HepG2 (cell line): ENCODE measurements at regions of chr18 and their contacts with region 1.

Region 1: GRCh38 chr18:70072678-70073077 is 125.0 kb upstream of the CD226 start:
- DNase-seq: peak; percentile 34
- ATAC-seq: peak; percentile 52; the same call in 1 of the 3 replicates
- H3K4me3 ChIP-seq: no peak overlapping the region
- H3K27ac ChIP-seq: no peak overlapping the region
- H3K4me1 ChIP-seq: no peaks in the 10 kb centered on the region
- H3K27me3 ChIP-seq: no peaks in the 10 kb centered on the region
- CTCF ChIP-seq: peak; percentile 70
- EP300 ChIP-seq: no peak
- POLR2A ChIP-seq: no peak
- RAD21 ChIP-seq: no peak

Region 2: DNA sequence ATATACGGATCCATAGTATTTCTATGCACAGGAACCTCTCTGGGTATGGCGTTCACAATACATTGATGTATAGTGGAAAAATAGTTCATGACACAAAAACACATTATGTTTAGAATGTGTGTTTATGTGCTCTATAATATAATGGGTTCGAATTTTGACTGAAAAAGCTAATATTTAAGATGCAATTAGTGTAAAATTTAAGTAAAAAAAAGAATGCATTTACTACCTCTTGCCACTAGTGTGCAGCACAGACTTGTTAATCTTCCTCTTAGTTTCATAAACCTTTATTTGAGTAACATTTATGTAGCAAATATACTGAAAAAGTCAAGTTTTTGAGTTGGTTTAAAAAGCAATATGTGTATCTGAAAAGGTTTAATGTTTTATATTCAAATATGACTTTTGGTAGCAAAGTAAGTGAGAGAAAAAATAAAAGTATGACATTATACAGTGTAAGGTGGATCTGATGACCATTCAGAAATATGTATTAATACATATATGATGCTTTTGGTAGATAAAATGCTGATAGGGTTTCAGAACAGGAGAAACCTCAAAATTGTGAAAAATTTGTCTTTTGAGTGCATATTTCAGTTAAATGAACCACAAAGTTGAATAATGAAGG is 1225.3 kb before region 1 on chr18:
- CTCF ChIA-PET with region 1: no interaction called
- POLR2A ChIA-PET with region 1: no interaction called
- in situ Hi-C with region 1: no loop called
- intact Hi-C with region 1: loop called (anchors 1 kb)
- DNase-seq: peak; percentile 4
- ATAC-seq: no peak
- H3K4me3 ChIP-seq: no peak overlapping the region
- H3K27ac ChIP-seq: no peak overlapping the region
- H3K4me1 ChIP-seq: no peaks in the 10 kb centered on the region
- H3K27me3 ChIP-seq: no peaks in the 10 kb centered on the region
- CTCF ChIP-seq: peak; percentile 63
- EP300 ChIP-seq: no peak
- POLR2A ChIP-seq: no peak
- RAD21 ChIP-seq: peak; percentile 38; the same call in 1 of the 2 replicates

Region 3: GRCh38 chr18:69239849-69240674 is 832.6 kb before region 1 on chr18:
- CTCF ChIA-PET with region 1: no interaction called
- POLR2A ChIA-PET with region 1: no interaction called
- in situ Hi-C with region 1: no loop called
- intact Hi-C with region 1: loop called (anchors 10 kb)
- DNase-seq: no peak
- ATAC-seq: no peak
- H3K4me3 ChIP-seq: no peak overlapping the region
- H3K27ac ChIP-seq: no peak overlapping the region
- H3K4me1 ChIP-seq: no peaks in the 10 kb centered on the region
- H3K27me3 ChIP-seq: no peaks in the 10 kb centered on the region
- CTCF ChIP-seq: no peak
- EP300 ChIP-seq: no peak
- POLR2A ChIP-seq: no peak
- RAD21 ChIP-seq: no peak

Region 4: DNA sequence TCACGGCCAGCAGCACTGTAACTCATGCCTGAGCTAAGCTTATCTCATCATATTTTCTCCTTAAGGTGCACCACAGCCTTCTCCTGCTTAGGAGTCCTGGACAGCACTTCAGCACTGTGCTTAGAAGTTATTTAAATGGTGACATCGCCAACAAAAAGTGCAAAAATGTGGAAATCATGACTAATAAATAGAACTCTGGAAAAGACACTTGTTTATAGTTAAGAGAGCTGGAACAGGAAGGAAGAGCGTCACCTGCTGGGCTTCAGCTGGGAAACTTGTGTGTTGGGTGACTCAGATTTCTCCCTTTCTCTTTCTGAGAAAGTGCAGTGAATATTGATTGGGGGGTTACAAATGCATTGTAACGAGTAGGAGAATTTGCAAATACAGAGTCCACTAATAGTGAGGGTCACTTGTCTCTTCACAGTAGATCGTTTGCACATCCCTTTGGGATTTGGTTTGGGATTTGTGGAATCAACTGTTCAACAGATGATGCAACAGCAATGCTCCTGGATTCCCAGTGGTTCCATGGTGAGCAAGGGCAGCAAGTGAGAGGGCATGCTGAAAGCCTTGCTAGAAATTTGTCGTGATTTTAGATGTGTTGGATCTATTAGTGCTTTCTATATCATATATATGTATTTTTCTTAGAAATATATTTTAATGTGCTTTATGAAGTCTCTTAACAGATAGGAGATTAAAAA is 587.8 kb before region 1 on chr18:
- CTCF ChIA-PET with region 1: no interaction called
- POLR2A ChIA-PET with region 1: no interaction called
- in situ Hi-C with region 1: no loop called
- intact Hi-C with region 1: loop called (anchors 10 kb)
- DNase-seq: peak; percentile 22
- ATAC-seq: peak; percentile 46; the same call in 2 of the 3 replicates
- H3K4me3 ChIP-seq: no peak overlapping the region
- H3K27ac ChIP-seq: no peak overlapping the region
- H3K4me1 ChIP-seq: peaks cover 20% of the 10 kb centered on the region; the same call in 1 of the 2 replicates
- H3K27me3 ChIP-seq: no peaks in the 10 kb centered on the region; a peak in 1 of 5 replicates
- CTCF ChIP-seq: peak; percentile 49
- EP300 ChIP-seq: no peak
- POLR2A ChIP-seq: no peak
- RAD21 ChIP-seq: no peak

Region 5: GRCh38 chr18:69757733-69758132 is 314.9 kb before region 1 on chr18:
- CTCF ChIA-PET with region 1: no interaction called
- POLR2A ChIA-PET with region 1: no interaction called
- in situ Hi-C with region 1: no loop called
- intact Hi-C with region 1: loop called (anchors 2 kb)
- DNase-seq: no peak
- ATAC-seq: no peak
- H3K4me3 ChIP-seq: no peak overlapping the region
- H3K27ac ChIP-seq: no peak overlapping the region
- H3K4me1 ChIP-seq: peaks cover 48% of the 10 kb centered on the region
- H3K27me3 ChIP-seq: no peaks in the 10 kb centered on the region
- CTCF ChIP-seq: no peak
- EP300 ChIP-seq: no peak
- POLR2A ChIP-seq: no peak
- RAD21 ChIP-seq: no peak

Region 6: GRCh38 chr18:70085641-70086040 is 13.0 kb after region 1 on chr18:
- CTCF ChIA-PET with region 1: no interaction called
- POLR2A ChIA-PET with region 1: no interaction called
- in situ Hi-C with region 1: no loop called
- intact Hi-C with region 1: no loop called
- DNase-seq: no peak
- ATAC-seq: no peak
- H3K4me3 ChIP-seq: no peak overlapping the region
- H3K27ac ChIP-seq: no peak overlapping the region
- H3K4me1 ChIP-seq: peaks cover 10% of the 10 kb centered on the region
- H3K27me3 ChIP-seq: no peaks in the 10 kb centered on the region
- CTCF ChIP-seq: no peak
- EP300 ChIP-seq: no peak
- POLR2A ChIP-seq: no peak
- RAD21 ChIP-seq: no peak